Naive thymus-derived CD4-positive, alpha-beta T cell (primary cell): ENCODE measurements at regions of chr17 and their contacts with region 1.

Region 1: GRCh38 chr17:35467824-35468223 is 19.3 kb upstream of the SLFN13 start:
- DNase-seq: peak in 4 of 9 donors; percentile 19 to 21 (median 20)
- ATAC-seq: peak; percentile 75
- H3K4me3 ChIP-seq: no peak overlapping the region
- H3K4me3 Mint-ChIP-seq: peak overlapping the region; percentile 32 to 72 (median 58)
- H3K27ac ChIP-seq: no peak overlapping the region
- H3K27ac Mint-ChIP-seq: peak overlapping the region; percentile 10 to 89 (median 71)
- H3K4me1 ChIP-seq: peaks cover 19 to 20% of the 10 kb centered on the region in 2 donors
- H3K4me1 Mint-ChIP-seq: peaks cover 23 to 74% (median 45%) of the 10 kb centered on the region in 7 donors
- H3K27me3 ChIP-seq: no peaks in the 10 kb centered on the region
- H3K27me3 Mint-ChIP-seq: no peaks in the 10 kb centered on the region

Region 2: GRCh38 chr17:35432176-35433074 is 35.4 kb before region 1 on chr17 and contains the start of gene SLFN12:
- CTCF ChIA-PET with region 1: no interaction called
- POLR2A ChIA-PET with region 1: no interaction called
- intact Hi-C with region 1: loop called in 1 of 2 experiments (anchors 5 kb)
- DNase-seq: peak in 8 of 9 donors; percentile 31 to 75 (median 70)
- ATAC-seq: peak; percentile 95
- H3K4me3 ChIP-seq: peak within 1 kb of the TSS; percentile 70
- H3K4me3 Mint-ChIP-seq: peak within 1 kb of the TSS; percentile 86 to 100 (median 96)
- H3K27ac ChIP-seq: peak within 1 kb of the TSS; percentile 63
- H3K27ac Mint-ChIP-seq: peak within 1 kb of the TSS; percentile 82 to 94 (median 91)
- H3K4me1 ChIP-seq: peaks cover 16 to 28% of the 10 kb centered on the region in 2 donors
- H3K4me1 Mint-ChIP-seq: peaks cover 36 to 65% (median 59%) of the 10 kb centered on the region in 7 donors
- H3K27me3 ChIP-seq: no peaks in the 10 kb centered on the region
- H3K27me3 Mint-ChIP-seq: no peaks in the 10 kb centered on the region
- total RNA-seq, gene SLFN12: 4.2 to 14.9 (median 6.5) TPM

Region 3: DNA sequence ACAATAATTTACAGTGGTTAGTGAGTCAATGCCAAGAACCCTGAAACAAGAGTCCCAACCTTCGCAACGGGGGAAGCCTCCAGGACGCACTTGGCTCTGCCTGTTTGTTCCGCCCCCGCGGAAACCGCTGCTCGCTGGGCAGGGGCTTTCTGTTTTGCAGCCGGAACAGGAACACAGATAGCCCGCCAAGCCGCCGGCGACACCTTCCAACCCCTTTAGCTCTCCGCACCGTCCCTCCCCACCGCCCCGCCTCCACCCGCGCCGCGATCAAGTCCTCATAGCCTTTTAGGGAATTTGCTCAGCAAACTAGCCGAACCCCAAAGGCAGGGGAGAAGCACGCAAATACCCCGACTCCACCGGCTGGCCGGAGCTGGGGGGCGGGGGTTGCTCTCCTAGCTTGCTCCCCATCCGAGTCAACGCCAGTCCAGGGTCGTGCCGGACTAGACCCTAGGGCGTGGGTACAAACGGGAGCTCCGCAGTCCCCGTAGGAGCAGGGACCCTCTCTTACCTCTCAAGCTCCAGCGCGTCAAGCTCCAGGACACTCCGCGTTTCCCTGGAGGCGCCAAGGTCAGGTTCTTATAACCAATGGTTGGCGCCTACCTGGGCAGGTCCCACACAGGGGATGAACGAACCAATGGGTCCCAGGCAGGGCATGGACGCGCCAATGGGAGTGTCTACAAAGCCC is 19.5 kb before region 1 on chr17 and contains the start of gene SLFN13:
- CTCF ChIA-PET with region 1: no interaction called
- POLR2A ChIA-PET with region 1: interaction called, 14 read pairs
- intact Hi-C with region 1: no loop called
- DNase-seq: peak; percentile 59 to 89 (median 74)
- ATAC-seq: peak; percentile 94
- H3K4me3 ChIP-seq: peak within 1 kb of the TSS; percentile 57
- H3K4me3 Mint-ChIP-seq: peak within 1 kb of the TSS; percentile 75 to 94 (median 87)
- H3K27ac ChIP-seq: peak within 1 kb of the TSS; percentile 69
- H3K27ac Mint-ChIP-seq: peak within 1 kb of the TSS; percentile 76 to 94 (median 83)
- H3K4me1 ChIP-seq: peaks cover 7 to 14% of the 10 kb centered on the region in 2 donors
- H3K4me1 Mint-ChIP-seq: peaks cover 0 to 33% (median 26%) of the 10 kb centered on the region in 7 donors
- H3K27me3 ChIP-seq: no peaks in the 10 kb centered on the region
- H3K27me3 Mint-ChIP-seq: no peaks in the 10 kb centered on the region
- total RNA-seq, gene SLFN13: 10.5 to 64.7 (median 21.0) TPM

Region 4: DNA sequence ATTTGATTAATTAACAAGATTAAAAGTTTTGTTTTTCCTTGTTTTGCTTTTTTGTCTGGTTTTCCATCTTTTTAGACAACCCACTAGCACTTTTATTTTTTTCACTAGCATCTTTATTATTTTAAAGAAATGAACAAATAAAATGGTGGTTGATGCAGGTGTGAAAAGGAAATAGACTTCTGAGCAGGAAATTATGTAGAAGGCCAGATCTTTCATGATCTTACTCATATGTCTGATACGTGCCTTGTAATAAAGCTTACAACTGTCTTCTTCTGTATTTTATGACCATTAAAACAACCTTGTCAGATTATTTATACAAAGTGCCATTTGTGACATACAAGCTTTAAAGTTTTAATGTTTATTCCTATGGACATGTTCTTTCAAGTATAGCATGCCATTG is 63.3 kb after region 1 on chr17:
- CTCF ChIA-PET with region 1: no interaction called
- POLR2A ChIA-PET with region 1: interaction called, 10 read pairs
- intact Hi-C with region 1: no loop called
- DNase-seq: no peak
- ATAC-seq: no peak
- H3K4me3 ChIP-seq: peak overlapping the region; percentile 28
- H3K4me3 Mint-ChIP-seq: peak overlapping the region in 8 of 10 donors; percentile 16 to 76 (median 55)
- H3K27ac ChIP-seq: peak overlapping the region; percentile 50
- H3K27ac Mint-ChIP-seq: peak overlapping the region in 8 of 9 donors; percentile 15 to 89 (median 60)
- H3K4me1 ChIP-seq: peaks cover 30 to 45% of the 10 kb centered on the region in 2 donors
- H3K4me1 Mint-ChIP-seq: peaks cover 46 to 84% (median 70%) of the 10 kb centered on the region in 7 donors
- H3K27me3 ChIP-seq: no peaks in the 10 kb centered on the region
- H3K27me3 Mint-ChIP-seq: no peaks in the 10 kb centered on the region